ENCODE measurements at regions of chr12 and their contacts with region 1.

Region 1: GRCh38 chr12:95336390-95337067 is 118.9 kb downstream of the VEZT start:
- DNase-seq: peak; percentile 75 to 94 (median 85)
- H3K4me3 ChIP-seq: no peak overlapping the region
- H3K27ac ChIP-seq: peak overlapping the region in 2 of 5 donors; percentile 7 to 22
- H3K4me1 ChIP-seq: peaks cover 0 to 7% of the 10 kb centered on the region in 2 donors
- H3K27me3 ChIP-seq: no peaks in the 10 kb centered on the region
- CTCF ChIP-seq: peak; percentile 66 to 97 (median 86)
- POLR2A ChIP-seq: no peak

Region 2: GRCh38 chr12:95117178-95117599 is 219.3 kb before region 1 on chr12:
- intact Hi-C with region 1: loop called (anchors 5 kb)
- DNase-seq: peak; percentile 69 to 89 (median 76)
- H3K4me3 ChIP-seq: no peak overlapping the region
- H3K27ac ChIP-seq: no peak overlapping the region
- H3K4me1 ChIP-seq: peaks cover 0 to 7% of the 10 kb centered on the region in 2 donors
- H3K27me3 ChIP-seq: no peaks in the 10 kb centered on the region
- CTCF ChIP-seq: peak; percentile 63 to 91 (median 80)
- POLR2A ChIP-seq: no peak

Region 3: DNA sequence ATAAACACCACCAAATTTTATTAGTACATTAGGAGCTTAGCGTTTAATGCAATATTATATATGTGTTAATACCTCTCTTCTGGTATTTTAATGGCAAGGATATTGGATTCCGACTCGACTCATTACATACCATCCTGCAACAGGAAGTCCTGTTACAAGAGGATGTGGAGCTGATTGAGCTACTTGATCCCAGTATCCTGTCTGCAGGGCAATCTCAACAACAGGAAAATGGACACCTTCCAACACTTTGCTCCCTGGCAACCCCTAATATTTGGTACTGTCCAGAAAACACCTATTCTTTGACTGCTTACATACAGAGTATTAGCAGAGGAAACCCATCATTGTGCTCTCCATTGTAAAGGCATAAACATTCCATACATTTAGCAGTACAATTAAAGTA is 73.7 kb before region 1 on chr12:
- intact Hi-C with region 1: no loop called
- DNase-seq: no peak
- H3K4me3 ChIP-seq: no peak overlapping the region
- H3K27ac ChIP-seq: peak overlapping the region in 1 of 5 donors; percentile 9
- H3K4me1 ChIP-seq: peaks cover 0 to 4% of the 10 kb centered on the region in 2 donors
- H3K27me3 ChIP-seq: no peaks in the 10 kb centered on the region
- CTCF ChIP-seq: no peak
- POLR2A ChIP-seq: no peak